ENCODE measurements at regions of chr9 and their contacts with region 1.

Region 1: GRCh38 chr9:132631303-132632084 is 38.3 kb downstream of the DDX31 start:
- DNase-seq: no peak
- H3K4me3 ChIP-seq: no peak overlapping the region
- H3K27ac ChIP-seq: no peak overlapping the region
- H3K4me1 ChIP-seq: no peaks in the 10 kb centered on the region
- H3K27me3 ChIP-seq: no peaks in the 10 kb centered on the region
- CTCF ChIP-seq: no peak
- POLR2A ChIP-seq: no peak

Region 2: GRCh38 chr9:131349881-131350563 is 1281.5 kb before region 1 on chr9:
- intact Hi-C with region 1: no loop called
- DNase-seq: peak; percentile 86 to 87
- H3K4me3 ChIP-seq: peak overlapping the region; percentile 19 to 53 (median 24)
- H3K27ac ChIP-seq: no peak overlapping the region
- H3K4me1 ChIP-seq: peaks cover 0 to 7% of the 10 kb centered on the region in 2 donors
- H3K27me3 ChIP-seq: no peaks in the 10 kb centered on the region
- CTCF ChIP-seq: peak; percentile 73 to 93 (median 88)
- POLR2A ChIP-seq: no peak

Region 3: GRCh38 chr9:132406554-132407122 is 224.9 kb before region 1 on chr9 and contains the start of gene TTF1:
- intact Hi-C with region 1: loop called (anchors 10 kb)
- DNase-seq: peak; percentile 80 to 86
- H3K4me3 ChIP-seq: peak within 1 kb of the TSS; percentile 66 to 79 (median 72)
- H3K27ac ChIP-seq: peak within 1 kb of the TSS; percentile 26 to 36
- H3K4me1 ChIP-seq: peaks cover 0 to 13% of the 10 kb centered on the region in 2 donors
- H3K27me3 ChIP-seq: peaks cover 0 to 19% of the 10 kb centered on the region in 2 donors
- CTCF ChIP-seq: no peak
- POLR2A ChIP-seq: peak; percentile 20
- total RNA-seq, gene TTF1: 11.2 to 18.0 (median 16.8) TPM

Region 4: DNA sequence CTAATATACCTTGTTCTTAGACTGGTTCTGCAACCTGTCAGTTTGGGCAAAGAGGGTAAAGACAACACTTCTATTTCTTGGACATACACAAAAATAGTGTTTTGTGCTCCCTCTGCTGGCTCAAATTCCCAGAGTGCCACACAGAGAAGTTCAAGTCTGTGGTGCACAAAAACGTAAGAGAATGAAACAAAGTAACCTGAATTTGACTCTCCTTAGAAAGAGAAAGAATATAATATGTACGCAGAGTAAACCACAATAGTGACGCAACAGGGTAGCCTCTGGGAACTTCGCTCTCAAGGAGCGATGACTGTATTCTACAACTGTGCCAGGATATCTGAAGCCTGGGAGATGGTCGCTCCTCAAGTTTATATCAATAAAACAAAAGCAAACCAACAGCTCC is 19.8 kb after region 1 on chr9:
- intact Hi-C with region 1: no loop called
- DNase-seq: no peak
- H3K4me3 ChIP-seq: no peak overlapping the region
- H3K27ac ChIP-seq: no peak overlapping the region
- H3K4me1 ChIP-seq: no peaks in the 10 kb centered on the region
- H3K27me3 ChIP-seq: no peaks in the 10 kb centered on the region
- CTCF ChIP-seq: peak in 1 of 3 donors; percentile 20
- POLR2A ChIP-seq: no peak

Region 5: GRCh38 chr9:132744881-132745755 is 113.6 kb after region 1 on chr9:
- intact Hi-C with region 1: no loop called
- DNase-seq: no peak
- H3K4me3 ChIP-seq: no peak overlapping the region
- H3K27ac ChIP-seq: no peak overlapping the region
- H3K4me1 ChIP-seq: no peaks in the 10 kb centered on the region
- H3K27me3 ChIP-seq: peaks cover 0 to 3% of the 10 kb centered on the region in 2 donors
- CTCF ChIP-seq: no peak
- POLR2A ChIP-seq: no peak